CD8-positive, alpha-beta T cell (primary cell): ENCODE measurements at regions of chr11 and their contacts with region 1.

Region 1: DNA sequence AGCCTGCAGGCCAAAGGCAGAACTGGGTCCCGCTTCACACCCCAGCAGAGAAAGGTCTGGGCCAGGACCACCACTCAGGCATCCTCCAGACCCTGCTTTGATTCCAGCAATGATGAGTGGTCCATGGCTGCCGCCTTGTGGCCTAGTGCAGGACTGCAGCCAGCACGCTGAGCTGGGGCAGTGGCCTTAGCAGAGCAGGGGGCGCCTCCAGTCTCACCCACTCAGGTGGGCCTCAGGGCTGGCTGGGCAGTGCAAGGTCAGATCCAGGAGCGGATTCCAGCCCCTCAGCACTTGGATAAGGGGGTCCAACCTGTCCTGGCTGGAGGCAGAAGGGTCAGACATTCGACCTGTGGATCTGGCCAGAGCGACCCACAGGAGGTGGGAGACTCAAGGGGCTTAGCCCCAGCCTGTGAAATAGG is 9.6 kb upstream of the PDE2A start:
- DNase-seq: peak; percentile 48 to 80 (median 66)
- ATAC-seq: peak; percentile 82
- H3K4me3 ChIP-seq: no peak overlapping the region
- H3K4me3 Mint-ChIP-seq: no peak overlapping the region
- H3K27ac ChIP-seq: no peak overlapping the region
- H3K27ac Mint-ChIP-seq: peak overlapping the region; percentile 27
- H3K4me1 ChIP-seq: peaks cover 6% of the 10 kb centered on the region
- H3K4me1 Mint-ChIP-seq: peaks cover 15% of the 10 kb centered on the region
- H3K27me3 ChIP-seq: no peaks in the 10 kb centered on the region
- H3K27me3 Mint-ChIP-seq: no peaks in the 10 kb centered on the region
- CTCF ChIP-seq: peak; percentile 90

Region 2: GRCh38 chr11:72848846-72849466 is 165.2 kb after region 1 on chr11:
- CTCF ChIA-PET with region 1: interaction called, 4 read pairs
- POLR2A ChIA-PET with region 1: no interaction called
- intact Hi-C with region 1: loop called in 1 of 2 experiments (anchors 1 kb)
- DNase-seq: peak in 5 of 9 experiments; percentile 29 to 67 (median 46)
- ATAC-seq: peak; percentile 71
- H3K4me3 ChIP-seq: no peak overlapping the region
- H3K4me3 Mint-ChIP-seq: no peak overlapping the region
- H3K27ac ChIP-seq: no peak overlapping the region
- H3K27ac Mint-ChIP-seq: no peak overlapping the region
- H3K4me1 ChIP-seq: no peaks in the 10 kb centered on the region
- H3K4me1 Mint-ChIP-seq: peaks cover 5% of the 10 kb centered on the region
- H3K27me3 ChIP-seq: no peaks in the 10 kb centered on the region
- H3K27me3 Mint-ChIP-seq: no peaks in the 10 kb centered on the region
- CTCF ChIP-seq: peak; percentile 61